Right ventricle myocardium inferior (tissue), 1 donor: ENCODE measurements at regions of chr5 and their contacts with region 1.

Region 1: DNA sequence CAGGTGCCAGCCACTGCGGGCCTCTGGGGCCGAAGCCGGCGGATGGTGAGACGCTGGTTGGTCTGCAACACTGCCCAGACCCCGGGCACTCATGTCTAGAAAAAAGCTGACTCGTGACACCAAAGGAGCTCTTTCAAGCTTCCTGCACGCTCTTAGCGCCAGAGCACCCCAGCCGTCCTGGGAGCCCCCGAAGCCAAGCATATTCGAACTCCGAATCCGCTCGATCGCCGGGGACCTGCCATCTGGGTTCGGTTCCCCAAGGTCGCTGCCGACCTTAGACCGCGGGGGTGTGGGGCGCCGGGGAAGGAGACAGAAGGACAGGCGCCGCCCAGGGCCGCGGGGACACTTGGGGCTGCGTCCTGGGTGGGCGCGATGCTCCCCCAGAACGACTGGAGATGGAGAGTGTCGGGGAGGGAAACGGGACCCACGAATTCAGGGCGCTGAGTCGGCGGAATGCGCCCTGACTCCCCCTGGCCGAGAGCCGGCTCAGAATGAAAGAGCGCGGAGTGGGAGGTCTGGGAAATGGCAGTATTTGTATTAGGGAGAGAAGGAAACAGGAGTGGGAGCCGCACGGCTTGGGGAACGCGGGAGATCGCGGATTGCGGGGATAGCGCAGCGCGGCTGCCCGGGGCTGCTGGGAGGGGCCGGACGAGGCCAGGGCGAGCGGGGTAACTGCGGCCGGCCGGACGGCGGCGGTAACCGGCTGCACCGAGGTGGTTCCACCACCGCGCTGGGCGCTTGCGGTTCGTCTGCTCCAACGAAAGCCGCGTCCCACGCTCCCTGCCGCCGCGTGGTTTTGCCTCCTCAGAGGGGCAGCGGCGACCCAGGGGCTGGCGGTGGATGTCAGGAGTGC is 20.1 kb upstream of the MARCHF6 start:
- DNase-seq: peak; percentile 74
- ATAC-seq: peak; percentile 49

Region 2: GRCh38 chr5:10307206-10308148 is 25.9 kb before region 1 on chr5 and contains the start of gene CMBL:
- intact Hi-C with region 1: loop called (anchors 2 kb)
- DNase-seq: peak; percentile 87
- ATAC-seq: peak; percentile 88
- total RNA-seq, gene CMBL: 46.2 TPM

Region 3: DNA sequence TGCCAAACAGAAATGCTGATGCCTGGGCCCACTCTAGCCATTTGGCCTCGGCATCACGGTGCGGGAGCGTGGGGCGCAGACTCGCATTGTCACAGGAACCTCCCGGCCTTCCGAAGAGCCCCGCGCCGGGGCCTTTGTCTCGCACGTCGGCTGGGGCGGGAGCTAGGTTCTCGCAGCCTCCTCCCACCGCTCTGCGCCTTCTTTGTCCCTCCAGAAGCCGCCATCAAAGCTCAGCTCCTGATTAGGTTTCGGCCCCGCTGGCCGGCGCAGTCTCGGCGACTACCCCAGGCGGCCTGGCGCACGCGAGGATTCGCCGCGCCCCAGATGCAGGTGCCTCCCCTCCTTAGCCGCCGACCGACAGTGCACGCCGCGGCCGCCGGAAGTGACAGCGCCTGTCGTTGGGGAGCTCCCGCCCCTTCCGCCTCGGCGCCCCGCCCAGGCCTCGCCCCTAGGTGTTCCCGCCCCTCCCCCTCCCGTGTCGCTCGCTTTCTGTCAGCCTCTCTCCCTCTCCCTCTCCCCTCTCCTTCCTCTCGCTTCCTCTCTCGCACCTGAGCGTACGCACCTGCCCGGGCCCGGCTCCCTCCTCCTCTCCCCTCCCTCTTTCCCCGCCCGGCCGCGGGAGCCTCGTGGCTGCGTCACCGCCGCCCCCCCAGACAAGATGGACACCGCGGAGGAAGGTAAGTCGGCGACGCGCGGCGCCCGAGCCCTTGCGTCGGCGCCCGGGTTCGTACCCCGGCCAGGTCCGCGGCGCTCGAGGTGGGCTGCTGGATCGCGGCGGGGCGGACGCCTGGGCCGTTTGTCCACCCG is 20.1 kb after region 1 on chr5 and contains the start of gene MARCHF6:
- intact Hi-C with region 1: loop called (anchors 2 kb)
- DNase-seq: peak; percentile 98
- ATAC-seq: peak; percentile 96
- total RNA-seq, gene MARCHF6: 161 TPM